ENCODE measurements at regions of chr17 and their contacts with region 1.

Region 1: DNA sequence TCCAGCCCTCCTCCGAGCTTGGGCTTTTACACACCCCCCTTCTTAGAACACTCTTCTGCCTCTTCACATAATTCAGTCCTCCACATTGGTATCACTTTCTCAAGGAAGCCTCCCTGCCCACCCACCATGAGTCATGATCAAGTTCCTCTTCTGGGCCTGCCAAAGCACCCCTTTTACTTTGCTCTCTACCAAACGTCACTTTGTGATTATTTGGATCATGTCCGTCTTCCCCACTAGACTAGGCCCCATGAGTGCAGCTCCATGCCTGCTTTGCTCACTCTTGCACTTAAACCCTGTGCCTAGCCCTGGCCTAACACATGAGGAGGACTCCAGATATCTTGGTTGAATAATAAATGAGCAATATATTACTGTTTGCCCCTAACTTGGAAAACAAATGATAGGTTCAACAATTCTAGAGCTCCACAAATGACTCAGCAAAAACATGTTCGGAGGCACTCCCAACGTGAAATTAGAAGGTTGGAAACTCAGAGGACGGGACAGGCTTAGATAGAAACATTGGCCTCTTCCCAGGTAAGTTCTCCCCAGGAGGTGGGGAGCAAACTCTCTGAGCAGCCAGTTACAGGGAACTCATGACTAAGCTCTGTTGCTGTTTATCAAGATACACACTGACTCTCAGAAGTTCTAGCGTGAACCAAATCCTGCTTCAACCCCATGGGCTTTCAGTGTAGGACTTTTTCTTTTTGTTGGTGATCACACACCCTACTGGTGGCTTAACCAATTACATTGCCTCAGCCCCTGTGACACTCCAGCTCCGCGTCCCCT is 28.3 kb downstream of the G6PC1 start:
- DNase-seq: peak in 1 of 2 donors; percentile 52
- ATAC-seq: peak; percentile 77 to 97 (median 95)
- H3K4me3 ChIP-seq: no peak overlapping the region
- H3K27ac ChIP-seq: peak overlapping the region in 7 of 10 donors; percentile 17 to 78 (median 45)
- H3K4me1 ChIP-seq: peaks cover 4 to 27% (median 12%) of the 10 kb centered on the region in 9 donors
- H3K27me3 ChIP-seq: no peaks in the 10 kb centered on the region
- CTCF ChIP-seq: peak; percentile 41 to 78 (median 72)

Region 2: GRCh38 chr17:42883802-42884553 is 44.9 kb before region 1 on chr17:
- intact Hi-C with region 1: loop called in 1 of 10 experiments (anchors 5 kb)
- DNase-seq: no peak
- ATAC-seq: no peak
- H3K4me3 ChIP-seq: no peak overlapping the region
- H3K27ac ChIP-seq: no peak overlapping the region
- H3K4me1 ChIP-seq: peaks cover 0 to 35% (median 8%) of the 10 kb centered on the region in 9 donors
- H3K27me3 ChIP-seq: no peaks in the 10 kb centered on the region
- CTCF ChIP-seq: no peak

Region 3: GRCh38 chr17:42891539-42892152 is 37.3 kb before region 1 on chr17:
- intact Hi-C with region 1: loop called in 1 of 10 experiments (anchors 5 kb)
- DNase-seq: peak; percentile 66 to 69
- ATAC-seq: peak; percentile 68 to 99 (median 90)
- H3K4me3 ChIP-seq: no peak overlapping the region
- H3K27ac ChIP-seq: peak overlapping the region; percentile 61 to 94 (median 83)
- H3K4me1 ChIP-seq: peaks cover 16 to 69% (median 43%) of the 10 kb centered on the region in 9 donors
- H3K27me3 ChIP-seq: no peaks in the 10 kb centered on the region
- CTCF ChIP-seq: no peak

Region 4: GRCh38 chr17:42964161-42964932 is 35.4 kb after region 1 on chr17 and contains the start of gene AARSD1:
- intact Hi-C with region 1: no loop called
- DNase-seq: peak; percentile 91
- ATAC-seq: peak; percentile 94 to 99 (median 98)
- H3K4me3 ChIP-seq: peak within 1 kb of the TSS; percentile 50 to 89 (median 77)
- H3K27ac ChIP-seq: peak within 1 kb of the TSS; percentile 0 to 93 (median 88)
- H3K4me1 ChIP-seq: peaks cover 0 to 17% (median 14%) of the 10 kb centered on the region in 9 donors
- H3K27me3 ChIP-seq: no peaks in the 10 kb centered on the region
- CTCF ChIP-seq: no peak
- total RNA-seq, gene AARSD1: 20.0 to 34.7 (median 28.9) TPM

Measured in heart right ventricle (tissue), 16 donors.